ENCODE measurements at regions of chr17 and their contacts with region 1.

Region 1: GRCh38 chr17:57833179-57833939 is 16.5 kb downstream of the MRPS23 start:
- DNase-seq: peak; percentile 84
- ATAC-seq: peak; percentile 67
- H3K4me3 Mint-ChIP-seq: peak overlapping the region; percentile 35
- H3K27ac Mint-ChIP-seq: peak overlapping the region; percentile 80
- H3K4me1 Mint-ChIP-seq: no peaks in the 10 kb centered on the region
- H3K27me3 Mint-ChIP-seq: no peaks in the 10 kb centered on the region

Region 2: GRCh38 chr17:57130761-57131461 is 702.4 kb before region 1 on chr17:
- CTCF ChIA-PET with region 1: interaction called, 11 read pairs
- POLR2A ChIA-PET with region 1: no interaction called
- DNase-seq: peak; percentile 89
- ATAC-seq: peak; percentile 91
- H3K4me3 Mint-ChIP-seq: peak overlapping the region; percentile 7
- H3K27ac Mint-ChIP-seq: no peak overlapping the region
- H3K4me1 Mint-ChIP-seq: peaks cover 7% of the 10 kb centered on the region
- H3K27me3 Mint-ChIP-seq: no peaks in the 10 kb centered on the region

Region 3: GRCh38 chr17:57739402-57740392 is 93.7 kb before region 1 on chr17:
- CTCF ChIA-PET with region 1: interaction called, 13 read pairs
- POLR2A ChIA-PET with region 1: no interaction called
- DNase-seq: peak; percentile 50
- ATAC-seq: peak; percentile 75
- H3K4me3 Mint-ChIP-seq: no peak overlapping the region
- H3K27ac Mint-ChIP-seq: peak overlapping the region; percentile 4
- H3K4me1 Mint-ChIP-seq: peaks cover 19% of the 10 kb centered on the region
- H3K27me3 Mint-ChIP-seq: peaks cover 7% of the 10 kb centered on the region

Region 4: GRCh38 chr17:57766318-57766943 is 66.9 kb before region 1 on chr17:
- CTCF ChIA-PET with region 1: interaction called, 10 read pairs
- POLR2A ChIA-PET with region 1: no interaction called
- DNase-seq: no peak
- ATAC-seq: no peak
- H3K4me3 Mint-ChIP-seq: no peak overlapping the region
- H3K27ac Mint-ChIP-seq: no peak overlapping the region
- H3K4me1 Mint-ChIP-seq: peaks cover 4% of the 10 kb centered on the region
- H3K27me3 Mint-ChIP-seq: peaks cover 30% of the 10 kb centered on the region

Region 5: GRCh38 chr17:57803025-57803424 is 30.3 kb before region 1 on chr17:
- CTCF ChIA-PET with region 1: interaction called, 14 read pairs
- POLR2A ChIA-PET with region 1: interaction called, 3 read pairs
- DNase-seq: no peak
- ATAC-seq: no peak
- H3K4me3 Mint-ChIP-seq: no peak overlapping the region
- H3K27ac Mint-ChIP-seq: no peak overlapping the region
- H3K4me1 Mint-ChIP-seq: no peaks in the 10 kb centered on the region
- H3K27me3 Mint-ChIP-seq: peaks cover 30% of the 10 kb centered on the region

Region 6: GRCh38 chr17:57849874-57850754 is 16.8 kb after region 1 on chr17 and contains the start of gene MRPS23:
- CTCF ChIA-PET with region 1: interaction called, 54 read pairs
- POLR2A ChIA-PET with region 1: interaction called, 5 read pairs
- DNase-seq: peak; percentile 98
- ATAC-seq: peak; percentile 93
- H3K4me3 Mint-ChIP-seq: peak within 1 kb of the TSS; percentile 97
- H3K27ac Mint-ChIP-seq: peak within 1 kb of the TSS; percentile 99
- H3K4me1 Mint-ChIP-seq: peaks cover 40% of the 10 kb centered on the region
- H3K27me3 Mint-ChIP-seq: no peaks in the 10 kb centered on the region
- total RNA-seq, gene MRPS23: 46.3 to 48.7 TPM

Region 7: GRCh38 chr17:58112970-58113631 is 279.7 kb after region 1 on chr17:
- CTCF ChIA-PET with region 1: interaction called, 16 read pairs
- POLR2A ChIA-PET with region 1: no interaction called
- DNase-seq: peak; percentile 90
- ATAC-seq: peak; percentile 88
- H3K4me3 Mint-ChIP-seq: no peak overlapping the region
- H3K27ac Mint-ChIP-seq: no peak overlapping the region
- H3K4me1 Mint-ChIP-seq: no peaks in the 10 kb centered on the region
- H3K27me3 Mint-ChIP-seq: peaks cover 7% of the 10 kb centered on the region

Measured in activated CD8-positive, alpha-beta T cell treated with anti-CD3 and anti-CD28 coated beads, Interleukin-2, amount 10 ng/mL, durations not matched to agents 7 days and 5 days (primary cell).